Gastrocnemius medialis (tissue), 4 donors: ENCODE measurements at regions of chr3 and their contacts with region 1.

Region 1: GRCh38 chr3:119676771-119677640 is at the start of gene COX17:
- DNase-seq: peak; percentile 94 to 97
- ATAC-seq: peak; percentile 95 to 96
- H3K4me3 ChIP-seq: peak within 1 kb of the TSS; percentile 72 to 86 (median 78)
- H3K27ac ChIP-seq: peak within 1 kb of the TSS; percentile 89 to 97 (median 96)
- H3K4me1 ChIP-seq: peaks cover 19% of the 10 kb centered on the region in 2 donors
- H3K27me3 ChIP-seq: no peaks in the 10 kb centered on the region
- CTCF ChIP-seq: no peak
- POLR2A ChIP-seq: peak; percentile 77 to 80
- total RNA-seq, gene COX17: 63.4 to 146 (median 87.5) TPM

Region 2: GRCh38 chr3:119293871-119294695 is 382.9 kb before region 1 on chr3 and contains the start of gene ARHGAP31:
- in situ Hi-C with region 1: loop called in 3 of 4 experiments (anchors 25 kb)
- intact Hi-C with region 1: no loop called
- DNase-seq: peak; percentile 32 to 46
- ATAC-seq: peak; percentile 68 to 77
- H3K4me3 ChIP-seq: peak within 1 kb of the TSS; percentile 64 to 88 (median 76)
- H3K27ac ChIP-seq: peak within 1 kb of the TSS; percentile 67 to 82 (median 74)
- H3K4me1 ChIP-seq: peaks cover 6 to 15% of the 10 kb centered on the region in 2 donors
- H3K27me3 ChIP-seq: no peaks in the 10 kb centered on the region
- CTCF ChIP-seq: no peak
- POLR2A ChIP-seq: peak in 1 of 2 donors; percentile 19
- total RNA-seq, gene ARHGAP31: 6.2 to 9.7 (median 7.3) TPM

Region 3: DNA sequence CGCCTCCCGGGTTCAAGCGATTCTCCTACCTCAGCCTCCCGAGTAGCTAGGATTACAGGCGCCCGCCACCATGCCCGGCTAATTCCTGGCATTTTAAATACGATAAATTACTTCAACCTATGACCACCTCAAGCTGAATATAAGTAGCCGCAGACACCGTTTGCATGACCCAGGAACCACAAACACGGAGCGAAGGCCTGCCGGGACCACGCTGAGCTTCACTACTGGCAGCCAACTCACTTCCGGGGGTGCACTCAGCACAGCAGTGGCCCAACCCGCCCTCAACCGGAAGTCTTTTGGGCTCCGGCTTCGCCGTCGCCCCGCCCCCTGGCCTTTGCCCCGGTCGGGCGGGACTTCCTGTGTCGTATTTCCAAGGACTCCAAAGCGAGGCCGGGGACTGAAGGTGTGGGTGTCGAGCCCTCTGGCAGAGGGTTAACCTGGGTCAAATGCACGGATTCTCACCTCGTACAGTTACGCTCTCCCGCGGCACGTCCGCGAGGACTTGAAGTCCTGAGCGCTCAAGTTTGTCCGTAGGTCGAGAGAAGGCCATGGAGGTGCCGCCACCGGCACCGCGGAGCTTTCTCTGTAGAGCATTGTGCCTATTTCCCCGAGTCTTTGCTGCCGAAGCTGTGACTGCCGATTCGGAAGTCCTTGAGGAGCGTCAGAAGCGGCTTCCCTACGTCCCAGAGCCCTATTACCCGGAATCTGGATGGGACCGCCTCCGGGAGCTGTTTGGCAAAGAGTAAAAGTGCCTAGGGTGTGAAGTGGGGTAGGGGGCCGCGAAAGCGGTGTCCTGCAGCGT is 178.6 kb before region 1 on chr3 and contains the start of gene TIMMDC1:
- in situ Hi-C with region 1: loop called in 3 of 4 experiments (anchors 25 kb)
- intact Hi-C with region 1: loop called (anchors 1 kb)
- DNase-seq: peak; percentile 96 to 98
- ATAC-seq: peak; percentile 96 to 98
- H3K4me3 ChIP-seq: peak within 1 kb of the TSS; percentile 71 to 93 (median 90)
- H3K27ac ChIP-seq: peak within 1 kb of the TSS; percentile 91 to 98 (median 94)
- H3K4me1 ChIP-seq: peaks cover 29 to 33% of the 10 kb centered on the region in 2 donors
- H3K27me3 ChIP-seq: no peaks in the 10 kb centered on the region
- CTCF ChIP-seq: no peak
- POLR2A ChIP-seq: peak; percentile 72 to 86
- total RNA-seq, gene TIMMDC1: 41.2 to 137 (median 101) TPM

Region 4: GRCh38 chr3:119579366-119580165 is 97.4 kb before region 1 on chr3 and contains the start of gene ADPRH:
- in situ Hi-C with region 1: no loop called
- intact Hi-C with region 1: loop called (anchors 5 kb)
- DNase-seq: peak; percentile 74 to 88
- ATAC-seq: peak; percentile 87 to 88
- H3K4me3 ChIP-seq: peak within 1 kb of the TSS; percentile 66 to 75 (median 71)
- H3K27ac ChIP-seq: peak within 1 kb of the TSS; percentile 92 to 97 (median 94)
- H3K4me1 ChIP-seq: peaks cover 8 to 13% of the 10 kb centered on the region in 2 donors
- H3K27me3 ChIP-seq: no peaks in the 10 kb centered on the region
- CTCF ChIP-seq: no peak
- POLR2A ChIP-seq: peak; percentile 57 to 76
- total RNA-seq, gene ADPRH: 8.2 to 15.3 (median 10.3) TPM

Region 5: DNA sequence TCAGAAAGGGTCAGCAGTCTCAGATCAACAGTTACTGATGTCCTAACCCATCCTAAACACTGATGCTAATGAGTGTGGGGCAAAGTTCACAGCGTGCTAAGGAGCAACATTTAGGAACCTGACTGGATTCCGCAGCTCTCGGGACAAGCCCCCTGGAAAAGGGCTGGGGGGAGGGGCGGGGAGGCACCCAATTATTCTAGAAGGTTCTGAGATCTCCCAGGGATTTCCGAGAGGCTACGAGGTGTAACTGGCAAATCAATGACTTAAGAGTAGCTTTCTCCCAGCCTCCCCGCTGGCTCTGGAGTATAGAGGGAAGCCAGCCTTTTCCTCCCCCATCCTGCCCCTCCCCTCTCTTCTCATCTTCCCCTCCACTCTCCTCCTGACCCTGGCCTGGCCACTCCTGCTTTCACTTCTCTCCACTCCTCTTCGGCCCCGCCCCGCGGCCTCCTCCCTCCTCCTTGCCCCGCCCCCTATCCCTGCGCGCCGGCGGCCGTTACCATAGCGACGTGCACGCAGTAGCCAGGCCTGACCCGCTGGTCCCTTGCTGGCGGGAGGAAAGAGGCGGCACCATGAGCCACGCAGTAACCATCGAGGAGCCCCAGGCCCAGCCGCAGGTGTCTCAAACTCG is 25.6 kb after region 1 on chr3 and contains the start of gene CFAP91:
- in situ Hi-C with region 1: no loop called
- intact Hi-C with region 1: loop called (anchors 2 kb)
- DNase-seq: peak; percentile 88 to 93
- ATAC-seq: peak; percentile 97 to 98
- H3K4me3 ChIP-seq: peak within 1 kb of the TSS; percentile 54 to 74 (median 60)
- H3K27ac ChIP-seq: peak within 1 kb of the TSS in 2 of 4 donors; percentile 16 to 48
- H3K4me1 ChIP-seq: peaks cover 0 to 8% of the 10 kb centered on the region in 2 donors
- H3K27me3 ChIP-seq: no peaks in the 10 kb centered on the region
- CTCF ChIP-seq: no peak
- POLR2A ChIP-seq: no peak
- total RNA-seq, gene CFAP91: 0.11 to 0.36 (median 0.20) TPM in 3 of 4 donors, not detected in the other